Psoas muscle (tissue), 8 donors: ENCODE measurements at regions of chr11 and their contacts with region 1.

Region 1: DNA sequence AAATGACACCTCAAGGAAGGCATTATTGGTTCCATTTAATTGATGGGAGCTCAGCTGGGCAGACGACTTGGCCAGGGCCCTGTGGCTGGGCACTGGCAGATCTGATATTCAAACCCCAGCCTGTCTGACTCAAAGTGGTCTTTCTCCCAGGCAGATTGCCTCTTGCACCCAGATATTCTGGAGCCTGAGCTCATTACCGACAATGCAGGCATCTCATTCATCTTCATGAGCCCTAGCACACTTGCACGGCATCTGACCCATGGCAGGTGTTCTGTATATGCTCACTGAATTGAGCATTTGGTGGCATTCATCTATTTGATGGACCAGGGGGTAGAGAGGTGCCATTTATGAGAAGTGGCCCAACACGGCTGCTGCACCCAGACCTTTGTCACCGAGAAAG is 193.1 kb downstream of the DSCAML1 start:
- DNase-seq: no peak
- ATAC-seq: no peak
- H3K4me3 ChIP-seq: no peak overlapping the region
- H3K27ac ChIP-seq: no peak overlapping the region
- H3K4me1 ChIP-seq: no peaks in the 10 kb centered on the region
- H3K27me3 ChIP-seq: peaks cover 0 to 14% (median 0%) of the 10 kb centered on the region in 3 donors
- CTCF ChIP-seq: no peak

Region 2: DNA sequence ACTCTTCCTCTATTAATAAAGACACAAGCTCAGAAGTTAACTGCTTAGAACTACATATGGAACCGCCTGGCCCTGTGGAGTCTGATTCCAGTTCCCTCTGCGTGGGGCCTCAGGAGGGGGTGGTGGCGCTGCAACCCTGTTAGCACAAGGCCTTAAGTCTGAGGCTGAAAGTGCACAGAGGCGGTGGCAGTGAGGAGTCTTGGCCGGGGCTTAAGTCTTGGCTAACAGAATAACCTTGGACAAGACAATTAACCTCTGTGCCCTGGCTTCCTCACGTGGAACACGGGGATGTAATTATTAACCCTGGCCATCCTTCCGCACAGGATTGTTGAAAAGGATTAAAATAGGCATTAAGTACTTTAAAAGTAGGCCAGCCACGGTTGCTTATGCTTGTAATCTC is 84.8 kb before region 1 on chr11:
- intact Hi-C with region 1: no loop called
- DNase-seq: no peak
- ATAC-seq: no peak
- H3K4me3 ChIP-seq: no peak overlapping the region
- H3K27ac ChIP-seq: no peak overlapping the region
- H3K4me1 ChIP-seq: no peaks in the 10 kb centered on the region
- H3K27me3 ChIP-seq: peaks cover 0 to 2% (median 0%) of the 10 kb centered on the region in 3 donors
- CTCF ChIP-seq: no peak

Region 3: GRCh38 chr11:117663821-117664220 is 59.9 kb after region 1 on chr11:
- intact Hi-C with region 1: loop called in 1 of 2 experiments (anchors 2 kb)
- DNase-seq: peak in 1 of 2 donors; percentile 29
- ATAC-seq: no peak
- H3K4me3 ChIP-seq: no peak overlapping the region
- H3K27ac ChIP-seq: no peak overlapping the region
- H3K4me1 ChIP-seq: no peaks in the 10 kb centered on the region
- H3K27me3 ChIP-seq: peaks cover 0 to 7% (median 4%) of the 10 kb centered on the region in 3 donors
- CTCF ChIP-seq: no peak